PC-3 (cell line): ENCODE measurements at regions of chr2 and their contacts with region 1.

Region 1: DNA sequence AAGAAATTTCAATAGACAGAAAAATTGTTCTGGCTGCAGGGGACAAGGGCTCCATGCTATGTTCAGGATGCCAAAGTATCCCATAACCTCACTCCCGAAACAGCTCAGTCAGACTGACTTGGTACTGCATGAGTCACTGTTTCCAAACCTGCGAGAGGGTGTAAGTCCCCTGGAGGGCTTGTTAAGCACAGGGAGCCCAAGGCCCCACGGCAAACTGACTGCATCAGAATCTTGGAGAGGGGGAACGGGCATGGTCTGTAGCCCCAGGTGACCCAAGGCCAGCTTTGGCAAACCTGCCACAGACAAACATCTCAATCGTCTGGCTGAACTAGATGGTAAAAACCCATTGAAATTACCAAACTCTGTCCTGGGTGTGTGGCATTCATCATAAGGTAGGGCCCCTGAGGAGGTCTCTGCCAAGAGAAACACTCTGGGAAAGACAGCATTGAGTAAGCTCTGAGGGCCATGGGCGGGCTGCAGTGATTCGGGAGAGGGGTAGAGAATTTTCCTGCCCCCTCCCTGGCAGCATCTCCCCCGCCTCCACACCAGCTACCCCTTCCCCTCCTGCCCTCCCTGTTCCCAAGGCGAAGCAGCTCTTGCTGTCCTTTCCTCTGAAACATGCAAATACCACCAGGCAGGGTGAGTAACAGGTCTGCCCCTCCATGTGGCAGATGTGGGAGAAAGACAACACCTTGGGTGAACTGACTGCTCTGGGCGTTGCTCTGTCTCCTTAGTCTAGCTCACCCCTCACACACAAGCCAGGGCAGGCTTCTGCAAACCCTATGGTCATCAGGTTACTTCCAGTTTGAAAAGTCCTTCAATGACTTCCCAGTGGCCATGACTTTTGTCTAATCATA is 274.7 kb upstream of the SIX2 start:
- DNase-seq: peak; percentile 97
- ATAC-seq: peak; percentile 78
- H3K4me3 ChIP-seq: no peak overlapping the region; the same call in 1 of the 2 replicates
- H3K27ac ChIP-seq: peak overlapping the region; percentile 98
- H3K4me1 ChIP-seq: peaks cover 70% of the 10 kb centered on the region
- H3K27me3 ChIP-seq: no peaks in the 10 kb centered on the region
- CTCF ChIP-seq: no peak

Region 2: GRCh38 chr2:45210462-45211195 is 73.4 kb before region 1 on chr2:
- CTCF ChIA-PET with region 1: no interaction called
- POLR2A ChIA-PET with region 1: no interaction called
- intact Hi-C with region 1: no loop called
- DNase-seq: peak; percentile 46
- ATAC-seq: no peak
- H3K4me3 ChIP-seq: no peak overlapping the region
- H3K27ac ChIP-seq: no peak overlapping the region
- H3K4me1 ChIP-seq: no peaks in the 10 kb centered on the region
- H3K27me3 ChIP-seq: no peaks in the 10 kb centered on the region
- CTCF ChIP-seq: 0 out of 2 replicates have a peak, but pooled peaks have one; percentile 9

Region 3: GRCh38 chr2:45329045-45329677 is 45.2 kb after region 1 on chr2:
- CTCF ChIA-PET with region 1: no interaction called
- POLR2A ChIA-PET with region 1: no interaction called
- intact Hi-C with region 1: loop called (anchors 5 kb)
- DNase-seq: peak; percentile 53
- ATAC-seq: peak; percentile 35; the same call in 1 of the 2 replicates
- H3K4me3 ChIP-seq: no peak overlapping the region
- H3K27ac ChIP-seq: peak overlapping the region; percentile 94
- H3K4me1 ChIP-seq: peaks cover 30% of the 10 kb centered on the region
- H3K27me3 ChIP-seq: no peaks in the 10 kb centered on the region
- CTCF ChIP-seq: peak; percentile 35; the same call in 1 of the 2 replicates

Region 4: DNA sequence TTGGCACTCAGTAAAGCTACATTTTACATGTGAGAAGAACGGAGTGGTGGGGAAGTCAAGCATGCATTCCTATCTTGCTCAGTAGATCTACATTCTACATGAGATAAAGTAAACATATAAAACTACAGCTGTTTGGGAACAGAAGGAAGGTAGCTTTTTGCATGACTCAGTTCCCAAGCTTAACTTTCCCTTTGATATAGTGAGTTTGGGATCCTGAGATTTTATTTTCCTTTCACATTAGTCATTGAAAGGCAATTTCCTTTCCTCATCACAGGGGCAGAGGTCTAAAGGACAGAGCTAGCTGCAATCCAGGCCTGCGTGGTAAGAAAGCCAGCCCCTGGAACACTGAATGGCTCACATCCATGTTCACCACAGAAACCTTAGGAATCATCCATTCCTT is 69.9 kb after region 1 on chr2:
- CTCF ChIA-PET with region 1: no interaction called
- POLR2A ChIA-PET with region 1: no interaction called
- intact Hi-C with region 1: loop called (anchors 2 kb)
- DNase-seq: peak; percentile 98
- ATAC-seq: peak; percentile 96
- H3K4me3 ChIP-seq: no peak overlapping the region
- H3K27ac ChIP-seq: peak overlapping the region; percentile 95
- H3K4me1 ChIP-seq: peaks cover 30% of the 10 kb centered on the region
- H3K27me3 ChIP-seq: no peaks in the 10 kb centered on the region
- CTCF ChIP-seq: no peak

Region 5: DNA sequence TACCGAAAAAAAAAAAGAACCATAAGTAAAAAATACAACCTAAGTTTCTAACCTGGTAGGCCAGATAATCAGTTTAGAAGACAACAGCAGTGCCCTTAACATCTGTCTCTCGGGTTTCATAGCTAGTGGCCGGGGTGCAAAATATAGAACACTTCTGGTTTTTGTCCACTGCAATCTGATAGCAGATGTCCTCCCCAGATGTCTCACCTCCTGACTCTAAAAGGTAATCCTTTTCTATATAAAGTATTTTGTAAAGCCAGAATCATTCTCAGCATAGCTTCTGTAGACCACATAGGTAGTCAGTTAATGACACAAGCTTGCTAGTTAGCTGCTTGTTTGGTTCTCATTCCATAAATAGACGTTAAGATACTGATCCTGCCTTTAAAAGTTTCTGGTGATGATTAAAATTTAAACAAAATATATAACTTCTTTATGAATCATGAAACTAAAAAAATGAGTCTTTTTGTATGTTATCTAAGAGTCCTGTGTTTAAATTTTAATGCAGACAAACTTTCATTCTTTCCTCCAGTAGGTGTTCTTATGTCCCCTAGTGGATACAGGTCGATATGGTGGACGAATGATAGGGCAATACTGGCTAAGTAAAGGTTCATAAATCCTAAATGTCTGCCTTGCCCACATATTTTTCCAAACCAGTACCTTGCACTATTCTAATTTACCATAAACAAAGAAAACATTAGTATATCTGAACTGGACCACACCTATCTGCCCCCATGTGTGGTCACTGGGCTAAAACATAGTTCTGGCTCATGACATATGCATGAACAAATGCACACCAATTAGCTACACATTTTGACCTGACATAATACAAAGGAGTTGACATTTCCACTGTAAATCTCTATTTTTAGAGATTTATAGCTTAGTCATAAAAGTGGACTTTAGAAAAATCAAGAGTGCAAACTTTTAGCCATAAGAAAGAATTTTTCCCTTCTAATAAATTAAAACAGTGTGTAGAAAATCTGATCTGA is 156.1 kb after region 1 on chr2:
- CTCF ChIA-PET with region 1: no interaction called
- POLR2A ChIA-PET with region 1: interaction called, 3 read pairs
- intact Hi-C with region 1: loop called (anchors 2 kb)
- DNase-seq: peak; percentile 59
- ATAC-seq: peak; percentile 76
- H3K4me3 ChIP-seq: no peak overlapping the region
- H3K27ac ChIP-seq: peak overlapping the region; percentile 71
- H3K4me1 ChIP-seq: peaks cover 21% of the 10 kb centered on the region
- H3K27me3 ChIP-seq: no peaks in the 10 kb centered on the region
- CTCF ChIP-seq: peak; percentile 80

Region 6: DNA sequence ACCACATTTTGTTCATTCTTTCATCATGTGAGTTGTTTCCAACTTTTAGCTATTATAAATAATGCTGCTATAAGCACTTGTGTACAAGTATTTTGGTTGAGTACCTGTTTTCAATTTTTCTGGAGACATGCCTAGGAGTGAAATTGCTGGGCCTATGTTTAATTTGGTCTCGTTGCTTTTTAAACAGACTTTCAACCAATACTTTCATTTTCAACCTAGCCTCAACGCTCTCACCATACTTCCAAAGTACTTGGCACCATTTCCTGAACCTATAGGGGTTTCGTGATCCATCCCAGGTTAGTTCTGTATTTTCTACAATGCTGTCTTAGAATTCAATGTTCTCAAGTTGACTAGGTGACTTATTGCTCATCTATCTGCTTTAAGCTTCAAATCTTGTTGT is 201.0 kb after region 1 on chr2:
- CTCF ChIA-PET with region 1: no interaction called
- POLR2A ChIA-PET with region 1: no interaction called
- intact Hi-C with region 1: loop called (anchors 5 kb)
- DNase-seq: no peak
- ATAC-seq: no peak
- H3K4me3 ChIP-seq: no peak overlapping the region
- H3K27ac ChIP-seq: no peak overlapping the region
- H3K4me1 ChIP-seq: no peaks in the 10 kb centered on the region
- H3K27me3 ChIP-seq: no peaks in the 10 kb centered on the region
- CTCF ChIP-seq: no peak

Region 7: GRCh38 chr2:46010925-46011490 is 727.0 kb after region 1 on chr2:
- CTCF ChIA-PET with region 1: no interaction called
- POLR2A ChIA-PET with region 1: interaction called, 17 read pairs
- intact Hi-C with region 1: no loop called
- DNase-seq: peak; percentile 72
- ATAC-seq: peak; percentile 75
- H3K4me3 ChIP-seq: no peak overlapping the region
- H3K27ac ChIP-seq: peak overlapping the region; percentile 44
- H3K4me1 ChIP-seq: peaks cover 27% of the 10 kb centered on the region
- H3K27me3 ChIP-seq: no peaks in the 10 kb centered on the region
- CTCF ChIP-seq: peak; percentile 94